ENCODE measurements at regions of chr17 and their contacts with region 1.

Region 1: DNA sequence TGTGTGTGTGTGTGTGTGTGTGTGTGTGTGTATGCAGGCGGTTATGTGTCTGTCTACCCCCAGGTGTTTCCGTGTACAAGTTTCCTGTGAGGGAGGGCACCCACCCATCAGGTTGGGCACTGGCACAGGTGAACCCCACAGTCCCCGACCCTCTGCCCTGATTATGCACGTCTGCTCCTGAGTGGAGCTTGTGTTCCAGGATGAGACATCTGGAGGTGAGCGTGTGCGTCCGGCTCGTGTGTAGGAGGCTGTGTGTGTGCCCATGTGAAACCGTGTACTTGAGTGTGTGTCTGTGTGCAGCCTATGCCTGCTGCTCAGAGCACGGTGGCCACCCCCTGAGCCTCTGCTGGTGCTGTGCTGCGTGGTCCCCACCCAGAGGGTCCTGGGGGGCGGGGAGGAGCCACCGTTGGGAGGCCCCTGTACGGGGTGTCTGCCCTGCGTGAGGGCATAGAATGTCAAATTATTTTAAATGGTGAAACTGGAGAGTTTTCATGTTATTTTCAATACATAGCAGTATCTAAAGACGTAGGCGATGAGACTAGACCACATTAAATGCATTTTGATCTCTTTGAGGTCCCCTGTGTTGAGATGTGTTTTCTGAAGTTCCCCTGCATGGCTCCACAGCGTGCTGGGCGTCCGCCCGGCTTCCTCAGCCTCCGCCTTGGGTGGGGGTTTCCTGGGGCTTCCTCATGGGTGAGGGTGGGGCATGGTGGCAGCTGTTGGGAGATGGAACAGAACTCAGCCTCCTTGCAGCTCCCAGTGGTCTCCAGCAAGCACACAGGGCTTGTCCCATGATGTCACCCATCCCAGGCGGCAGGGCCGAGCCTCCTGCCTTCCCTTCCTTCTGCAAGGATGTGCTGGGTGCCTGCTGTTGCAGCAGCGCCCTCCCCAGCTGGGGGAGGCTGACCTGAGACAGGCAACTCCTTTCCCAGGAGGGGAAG is 43.4 kb downstream of the KCNJ12 start:
- DNase-seq: peak in 1 of 6 donors; percentile 55
- ATAC-seq: no peak
- H3K4me3 ChIP-seq: no peak overlapping the region
- H3K27ac ChIP-seq: no peak overlapping the region
- H3K4me1 ChIP-seq: no peaks in the 10 kb centered on the region
- H3K27me3 ChIP-seq: no peaks in the 10 kb centered on the region
- CTCF ChIP-seq: no peak

Region 2: GRCh38 chr17:21475571-21475970 is 56.0 kb after region 1 on chr17:
- intact Hi-C with region 1: no loop called
- DNase-seq: no peak
- ATAC-seq: no peak
- H3K4me3 ChIP-seq: no peak overlapping the region
- H3K27ac ChIP-seq: no peak overlapping the region
- H3K4me1 ChIP-seq: no peaks in the 10 kb centered on the region
- H3K27me3 ChIP-seq: peaks cover 0 to 3% (median 0%) of the 10 kb centered on the region in 4 donors
- CTCF ChIP-seq: no peak

Region 3: DNA sequence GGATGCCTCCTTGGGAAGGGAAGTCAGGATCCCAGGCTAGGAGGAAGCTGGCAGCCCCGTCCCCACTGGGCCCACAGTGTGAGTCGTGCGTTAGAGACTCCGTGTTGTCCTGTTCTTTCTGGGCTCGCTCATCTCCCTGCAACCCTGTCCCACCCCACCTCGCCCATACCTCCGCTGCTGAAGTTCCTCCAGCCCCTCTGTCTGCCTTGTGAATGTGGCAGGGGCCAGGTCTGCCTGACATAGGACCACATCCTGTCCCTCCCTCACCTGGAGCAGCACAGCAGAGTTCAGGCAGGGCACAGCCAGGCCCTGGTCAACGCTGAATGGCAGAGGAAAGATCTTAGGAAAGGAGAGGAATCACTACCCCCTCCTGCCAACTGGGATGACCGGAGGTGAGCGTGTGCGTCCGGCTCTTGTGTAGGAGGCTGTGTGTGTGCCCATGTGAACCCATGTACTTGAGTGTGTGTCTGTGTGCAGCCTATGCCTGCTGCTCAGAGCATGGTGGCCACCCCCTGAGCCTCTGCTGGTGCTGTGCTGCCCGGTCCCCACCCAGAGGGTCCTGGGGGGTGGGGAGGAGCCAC is 285.5 kb after region 1 on chr17:
- intact Hi-C with region 1: loop called in 2 of 3 experiments (anchors 5 to 10 kb)
- DNase-seq: peak in 1 of 6 donors; percentile 58
- ATAC-seq: no peak
- H3K4me3 ChIP-seq: no peak overlapping the region
- H3K27ac ChIP-seq: no peak overlapping the region
- H3K4me1 ChIP-seq: no peaks in the 10 kb centered on the region
- H3K27me3 ChIP-seq: no peaks in the 10 kb centered on the region
- CTCF ChIP-seq: no peak

Region 4: GRCh38 chr17:22286337-22287041 is 866.9 kb after region 1 on chr17:
- intact Hi-C with region 1: no loop called
- DNase-seq: no peak
- ATAC-seq: no peak
- H3K4me3 ChIP-seq: no peak overlapping the region
- H3K27ac ChIP-seq: no peak overlapping the region
- H3K4me1 ChIP-seq: no peaks in the 10 kb centered on the region
- H3K27me3 ChIP-seq: no peaks in the 10 kb centered on the region
- CTCF ChIP-seq: no peak